Dendritic cell treated with granulocyte-macrophage colony-stimulating factor and Interleukin-4, amounts not matched to agents 40 ng/mL and 50 ng/mL, for 4 days (primary cell): ENCODE measurements at regions of chr12 and their contacts with region 1.

Region 1: GRCh38 chr12:132460571-132460970 is 29.4 kb upstream of the FBRSL1 start:
- H3K4me3 Mint-ChIP-seq: no peak overlapping the region
- H3K27ac Mint-ChIP-seq: no peak overlapping the region
- H3K4me1 Mint-ChIP-seq: peaks cover 5% of the 10 kb centered on the region
- H3K27me3 Mint-ChIP-seq: peaks cover 41% of the 10 kb centered on the region

Region 2: DNA sequence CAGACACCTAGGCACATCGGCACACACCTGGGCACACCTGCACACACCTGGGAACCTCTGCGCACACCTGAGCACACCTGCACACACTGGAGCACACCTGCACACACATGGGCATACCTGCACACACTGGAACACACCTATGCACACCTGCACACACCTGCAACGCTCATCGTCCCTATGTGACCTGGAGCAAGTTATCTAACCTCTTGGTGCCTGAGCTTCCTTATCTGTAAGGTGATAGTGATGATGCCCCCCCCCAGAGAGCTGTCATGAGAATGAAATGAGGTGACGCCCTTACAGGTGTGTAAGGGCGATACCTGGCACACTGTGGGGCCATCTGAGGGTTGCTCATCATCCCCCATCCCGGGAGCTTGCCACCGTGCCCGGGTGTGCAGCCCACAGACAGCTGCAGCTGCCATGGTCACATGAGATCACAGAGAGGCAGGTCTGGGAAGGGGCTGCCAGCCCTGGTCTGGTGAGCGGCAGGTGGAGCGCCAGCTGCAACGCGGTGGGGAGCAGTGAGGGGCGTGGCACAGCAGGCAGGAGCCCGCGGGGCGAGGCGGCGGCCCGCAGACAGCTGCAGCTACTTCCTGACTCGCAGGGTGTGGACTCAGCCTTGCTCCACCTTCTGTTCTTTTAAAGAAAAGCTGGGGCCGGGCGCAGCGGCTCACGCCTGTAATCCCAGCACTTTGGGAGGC is 30.5 kb before region 1 on chr12:
- intact Hi-C with region 1: loop called (anchors 5 kb)
- H3K4me3 Mint-ChIP-seq: peak overlapping the region; percentile 54
- H3K27ac Mint-ChIP-seq: peak overlapping the region; percentile 60
- H3K4me1 Mint-ChIP-seq: peaks cover 32% of the 10 kb centered on the region
- H3K27me3 Mint-ChIP-seq: peaks cover 63% of the 10 kb centered on the region

Region 3: GRCh38 chr12:132523576-132524331 is 63.2 kb after region 1 on chr12:
- intact Hi-C with region 1: loop called (anchors 2 kb)
- H3K4me3 Mint-ChIP-seq: no peak overlapping the region
- H3K27ac Mint-ChIP-seq: no peak overlapping the region
- H3K4me1 Mint-ChIP-seq: peaks cover 32% of the 10 kb centered on the region
- H3K27me3 Mint-ChIP-seq: no peaks in the 10 kb centered on the region